Activated naive CD4-positive, alpha-beta T cell treated with anti-CD3 and anti-CD28 coated beads, Interleukin-2, amount 10 ng/mL, durations not matched to agents 7 days and 5 days (primary cell): ENCODE measurements at regions of chr12 and their contacts with region 1.

Region 1: GRCh38 chr12:6825398-6826124 is 2.6 kb upstream of the P3H3 start:
- DNase-seq: peak; percentile 89
- H3K4me3 Mint-ChIP-seq: no peak overlapping the region
- H3K27ac Mint-ChIP-seq: no peak overlapping the region
- H3K4me1 Mint-ChIP-seq: peaks cover 38% of the 10 kb centered on the region
- H3K27me3 Mint-ChIP-seq: peaks cover 99% of the 10 kb centered on the region

Region 2: DNA sequence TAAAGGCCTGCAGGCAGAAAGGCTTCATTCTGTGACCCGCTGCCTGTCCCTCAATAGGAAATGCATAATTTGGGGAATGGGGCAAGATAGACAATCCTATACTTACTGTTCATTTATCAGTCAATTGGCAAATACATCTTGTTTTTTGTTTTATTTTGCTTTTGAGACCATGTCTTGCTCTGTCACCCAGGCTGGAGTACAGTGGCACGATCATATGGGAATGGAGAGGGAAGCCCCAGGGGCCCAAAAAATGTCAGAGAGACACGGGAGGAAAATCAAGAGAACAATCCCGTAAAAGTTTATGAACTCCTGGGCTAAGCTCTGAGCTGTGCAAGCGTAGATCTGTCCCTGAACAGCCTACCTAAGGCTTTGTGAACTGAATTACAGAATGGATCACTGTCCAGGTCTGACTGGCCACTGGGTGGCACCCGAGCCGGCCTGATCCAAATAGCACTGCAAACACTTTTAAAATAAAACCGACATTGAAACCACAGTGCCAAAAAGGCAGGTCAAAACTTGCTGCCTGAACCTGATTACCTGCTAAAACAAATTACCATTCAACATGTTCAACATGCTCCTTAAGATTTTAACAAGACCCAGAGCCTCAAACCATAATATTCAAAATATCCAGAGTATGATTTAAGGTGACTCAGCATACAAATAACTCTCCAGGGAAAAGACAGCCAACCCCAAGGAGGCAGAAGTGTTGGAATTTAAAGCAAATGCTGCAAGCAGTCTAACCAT is 89.9 kb before region 1 on chr12:
- CTCF ChIA-PET with region 1: interaction called, 10 read pairs
- DNase-seq: peak; percentile 66
- H3K4me3 Mint-ChIP-seq: no peak overlapping the region
- H3K27ac Mint-ChIP-seq: no peak overlapping the region
- H3K4me1 Mint-ChIP-seq: peaks cover 13% of the 10 kb centered on the region
- H3K27me3 Mint-ChIP-seq: no peaks in the 10 kb centered on the region

Region 3: DNA sequence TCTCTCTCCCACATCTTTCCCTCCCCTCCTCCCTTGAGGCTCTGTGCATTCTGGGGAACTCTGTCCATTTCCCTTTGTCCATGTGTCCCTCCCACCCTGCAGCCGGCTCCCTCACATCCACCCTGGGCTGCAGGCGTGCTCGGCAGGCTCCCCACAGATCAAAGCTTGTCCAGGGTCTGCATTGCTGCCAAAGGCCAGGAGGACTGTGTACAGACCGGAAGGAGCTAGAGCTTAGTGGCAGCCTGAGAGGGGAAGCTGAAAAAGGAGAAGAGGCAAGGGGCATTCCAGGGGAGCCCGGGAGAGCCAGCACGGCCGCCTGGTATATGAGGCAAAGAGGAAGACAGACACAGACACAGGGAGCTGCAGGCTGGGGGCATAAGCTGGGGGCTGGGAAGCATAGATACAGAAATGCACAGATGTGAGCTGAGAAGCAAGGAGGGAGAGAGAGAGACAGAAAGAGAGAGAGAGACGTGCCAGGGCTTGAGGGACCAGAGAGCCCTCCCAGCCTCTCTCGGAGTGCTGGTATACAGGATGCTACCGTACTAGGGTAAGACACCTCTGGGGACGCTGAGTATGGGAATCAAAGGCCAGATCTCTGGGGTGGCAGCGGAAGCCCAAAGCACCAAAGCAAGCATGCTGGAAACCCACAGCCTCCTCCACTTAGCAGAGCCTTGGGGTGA is 32.9 kb before region 1 on chr12:
- CTCF ChIA-PET with region 1: interaction called, 15 read pairs
- DNase-seq: peak; percentile 78
- H3K4me3 Mint-ChIP-seq: peak overlapping the region; percentile 84
- H3K27ac Mint-ChIP-seq: peak overlapping the region; percentile 92
- H3K4me1 Mint-ChIP-seq: peaks cover 64% of the 10 kb centered on the region
- H3K27me3 Mint-ChIP-seq: no peaks in the 10 kb centered on the region

Region 4: DNA sequence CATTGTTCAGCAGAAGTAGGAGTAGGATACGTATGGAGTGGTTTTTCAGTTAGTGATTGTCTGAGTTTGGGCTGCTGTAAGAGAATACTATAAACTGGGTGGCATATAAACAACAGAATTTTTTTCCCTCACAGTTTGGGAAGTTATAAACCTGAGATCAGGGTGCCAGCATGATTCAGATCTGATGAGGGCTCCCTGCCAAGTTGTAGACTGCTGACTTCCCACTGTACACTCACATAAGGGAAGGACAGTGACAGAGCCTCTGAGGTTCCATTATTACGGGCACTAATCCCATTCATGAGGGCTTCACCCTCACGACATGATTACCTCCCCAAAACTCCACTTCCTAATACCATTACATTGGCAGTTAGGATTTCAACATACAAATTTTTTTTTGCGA is 529.0 kb after region 1 on chr12:
- CTCF ChIA-PET with region 1: no interaction called
- DNase-seq: no peak
- H3K4me3 Mint-ChIP-seq: no peak overlapping the region
- H3K27ac Mint-ChIP-seq: no peak overlapping the region
- H3K4me1 Mint-ChIP-seq: peaks cover 4% of the 10 kb centered on the region
- H3K27me3 Mint-ChIP-seq: peaks cover 8% of the 10 kb centered on the region